CD4-positive, alpha-beta memory T cell (primary cell): ENCODE measurements at regions of chr5 and their contacts with region 1.

Region 1: GRCh38 chr5:34522599-34523386 is 133.3 kb upstream of the RAI14 start:
- DNase-seq: peak; percentile 33 to 50 (median 41)
- H3K4me3 ChIP-seq: no peak overlapping the region
- H3K4me3 Mint-ChIP-seq: no peak overlapping the region
- H3K27ac ChIP-seq: no peak overlapping the region
- H3K27ac Mint-ChIP-seq: no peak overlapping the region
- H3K4me1 ChIP-seq: no peaks in the 10 kb centered on the region
- H3K4me1 Mint-ChIP-seq: peaks cover 0 to 1% (median 0%) of the 10 kb centered on the region in 4 donors
- H3K27me3 ChIP-seq: no peaks in the 10 kb centered on the region
- H3K27me3 Mint-ChIP-seq: peaks cover 2 to 7% of the 10 kb centered on the region in 2 donors

Region 2: GRCh38 chr5:34533582-34534522 is 11.1 kb after region 1 on chr5:
- CTCF ChIA-PET with region 1: interaction called, 13 read pairs
- POLR2A ChIA-PET with region 1: no interaction called
- intact Hi-C with region 1: no loop called
- DNase-seq: no peak
- H3K4me3 ChIP-seq: no peak overlapping the region
- H3K4me3 Mint-ChIP-seq: no peak overlapping the region
- H3K27ac ChIP-seq: no peak overlapping the region
- H3K27ac Mint-ChIP-seq: no peak overlapping the region
- H3K4me1 ChIP-seq: no peaks in the 10 kb centered on the region
- H3K4me1 Mint-ChIP-seq: no peaks in the 10 kb centered on the region
- H3K27me3 ChIP-seq: peaks cover 6% of the 10 kb centered on the region
- H3K27me3 Mint-ChIP-seq: peaks cover 5 to 9% of the 10 kb centered on the region in 2 donors